Prostate gland (tissue), 2 donors: ENCODE measurements at regions of chr1 and their contacts with region 1.

Region 1: DNA sequence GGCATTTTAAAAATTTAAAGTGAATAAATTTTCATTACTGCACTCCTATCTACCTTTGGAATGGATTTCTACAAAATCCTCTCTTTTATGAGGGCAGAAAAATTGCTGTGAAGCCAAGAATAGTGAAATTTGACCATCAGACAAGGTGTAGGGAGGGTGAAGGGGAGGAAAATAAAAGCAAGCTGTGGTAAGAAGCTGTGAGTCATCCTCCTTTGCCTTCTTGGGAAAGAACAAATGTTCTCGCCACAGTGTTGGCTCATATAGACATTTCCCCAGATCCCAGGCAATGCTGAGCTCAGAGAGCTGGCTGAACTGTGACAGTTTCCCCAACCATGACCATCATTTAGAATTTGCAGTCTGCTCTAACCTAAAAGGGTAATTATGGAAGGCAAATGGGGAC is 235.3 kb downstream of the PBX1 start:
- DNase-seq: peak; percentile 70
- H3K4me3 ChIP-seq: no peak overlapping the region
- H3K27ac ChIP-seq: peak overlapping the region; percentile 55 to 70
- H3K4me1 ChIP-seq: peaks cover 5% of the 10 kb centered on the region
- H3K27me3 ChIP-seq: no peaks in the 10 kb centered on the region
- CTCF ChIP-seq: no peak
- POLR2A ChIP-seq: no peak

Region 2: DNA sequence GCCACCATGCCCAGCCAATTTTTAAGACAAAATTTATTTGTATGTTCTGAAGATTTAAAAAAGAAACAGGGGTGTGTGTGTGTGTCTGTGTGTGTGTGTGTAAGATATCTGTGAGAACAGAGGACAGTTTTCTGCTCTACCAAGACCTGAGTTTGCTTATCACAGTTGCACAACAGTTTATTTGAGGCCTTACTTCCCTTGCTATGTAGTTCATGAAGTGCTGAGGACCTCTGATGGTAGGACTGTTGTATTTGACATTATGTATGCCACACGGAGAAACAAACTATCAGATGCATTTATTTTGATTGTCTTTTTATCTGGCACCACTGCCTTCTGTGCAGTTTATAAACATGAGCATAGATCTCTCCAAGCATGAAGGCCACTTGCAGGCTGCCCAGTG is 119.9 kb after region 1 on chr1:
- intact Hi-C with region 1: loop called (anchors 5 kb)
- DNase-seq: peak; percentile 24
- H3K4me3 ChIP-seq: no peak overlapping the region
- H3K27ac ChIP-seq: no peak overlapping the region
- H3K4me1 ChIP-seq: no peaks in the 10 kb centered on the region
- H3K27me3 ChIP-seq: no peaks in the 10 kb centered on the region
- CTCF ChIP-seq: peak in 2 of 4 experiments; percentile 53 to 58
- POLR2A ChIP-seq: no peak